ENCODE measurements at regions of chr15 and their contacts with region 1.

Region 1: GRCh38 chr15:91852741-91853510 is 582 bp upstream of the SLCO3A1 start:
- DNase-seq: peak; percentile 73
- H3K4me3 Mint-ChIP-seq: peak overlapping the region; percentile 84
- H3K27ac Mint-ChIP-seq: peak overlapping the region; percentile 89
- H3K4me1 Mint-ChIP-seq: peaks cover 52% of the 10 kb centered on the region
- H3K27me3 Mint-ChIP-seq: peaks cover 6% of the 10 kb centered on the region

Region 2: DNA sequence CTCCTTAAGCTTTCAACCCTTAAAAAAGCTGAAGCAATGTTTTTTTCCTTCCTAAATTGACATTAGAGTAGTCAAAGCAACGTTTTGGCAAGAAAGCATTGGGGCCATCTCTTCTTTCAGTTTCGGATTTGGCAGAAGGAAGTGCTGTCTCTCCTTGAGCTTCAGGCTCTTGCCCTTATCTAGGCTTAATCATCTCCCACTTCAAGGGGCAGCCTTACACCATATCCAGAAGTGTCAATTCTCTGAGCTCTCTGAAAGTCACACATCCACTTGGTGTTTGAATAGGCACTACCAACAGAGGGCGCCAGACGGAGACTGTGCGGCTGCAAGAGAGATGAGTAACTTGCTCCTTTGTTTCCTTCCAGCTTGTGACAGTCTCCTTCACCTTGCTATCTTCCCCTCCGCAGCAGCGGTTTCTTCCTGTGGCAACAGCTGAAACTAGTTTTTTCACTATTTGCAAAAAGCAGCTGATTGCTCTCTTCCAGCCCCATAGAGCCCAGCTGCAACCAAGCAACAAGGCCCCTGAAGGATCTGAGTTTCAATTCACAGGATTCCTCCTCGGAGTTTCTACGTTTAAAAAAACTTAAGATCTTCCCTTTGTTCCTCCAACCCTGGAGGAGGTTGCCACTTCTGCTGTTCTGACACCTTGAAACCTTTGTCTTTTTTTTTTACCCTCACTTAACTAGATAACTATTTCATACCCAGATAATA is 146.4 kb before region 1 on chr15:
- intact Hi-C with region 1: loop called (anchors 2 kb)
- DNase-seq: peak; percentile 86
- H3K4me3 Mint-ChIP-seq: no peak overlapping the region
- H3K27ac Mint-ChIP-seq: peak overlapping the region; percentile 50
- H3K4me1 Mint-ChIP-seq: peaks cover 16% of the 10 kb centered on the region
- H3K27me3 Mint-ChIP-seq: peaks cover 22% of the 10 kb centered on the region

Region 3: DNA sequence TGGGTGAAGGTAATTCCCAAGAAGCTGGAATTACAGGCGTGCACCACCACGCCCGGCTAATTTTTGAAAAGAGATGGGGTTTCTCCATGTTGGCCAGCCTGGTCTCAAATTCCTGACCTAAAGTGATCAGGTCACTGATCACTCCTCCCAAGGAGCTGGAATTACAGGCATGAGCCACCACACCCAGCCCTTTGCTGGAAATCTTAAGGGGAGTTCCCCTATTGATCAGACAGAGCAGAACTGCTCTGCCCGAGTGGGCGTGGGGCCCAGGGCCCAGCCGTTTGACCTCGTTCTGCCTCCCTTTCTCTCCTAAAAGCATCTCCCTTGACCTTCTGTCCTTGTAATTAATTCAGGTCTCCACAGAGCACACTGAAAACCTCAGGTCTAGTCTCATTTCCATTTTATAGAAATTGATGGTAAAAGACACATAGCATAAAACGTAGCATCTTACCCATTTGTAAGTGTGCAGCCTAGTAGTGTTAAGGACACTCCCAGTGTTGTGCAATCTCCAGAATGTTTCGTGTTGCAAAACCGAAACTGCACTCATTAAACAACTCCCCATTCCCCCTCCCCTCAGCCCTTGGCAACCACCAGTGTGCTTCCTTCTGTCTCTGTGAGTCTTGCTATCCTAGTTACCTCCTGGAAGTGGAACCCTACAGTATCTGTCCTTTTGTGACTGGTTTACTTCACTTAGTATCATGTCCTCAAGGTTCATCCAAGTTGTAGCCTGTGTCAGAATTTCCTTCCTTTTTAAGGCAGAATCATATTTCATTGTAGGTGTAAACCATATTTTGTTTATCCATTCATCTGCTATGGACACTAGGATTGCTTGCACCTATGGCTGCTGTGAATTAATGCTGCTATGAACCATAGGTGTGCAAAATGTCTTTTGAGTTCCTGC is 90.0 kb after region 1 on chr15:
- intact Hi-C with region 1: loop called (anchors 5 kb)
- DNase-seq: peak; percentile 52
- H3K4me3 Mint-ChIP-seq: no peak overlapping the region
- H3K27ac Mint-ChIP-seq: peak overlapping the region; percentile 65
- H3K4me1 Mint-ChIP-seq: peaks cover 39% of the 10 kb centered on the region
- H3K27me3 Mint-ChIP-seq: no peaks in the 10 kb centered on the region

Region 4: GRCh38 chr15:91992945-91993344 is 140.0 kb after region 1 on chr15:
- intact Hi-C with region 1: no loop called
- DNase-seq: no peak
- H3K4me3 Mint-ChIP-seq: no peak overlapping the region
- H3K27ac Mint-ChIP-seq: no peak overlapping the region
- H3K4me1 Mint-ChIP-seq: peaks cover 7% of the 10 kb centered on the region
- H3K27me3 Mint-ChIP-seq: no peaks in the 10 kb centered on the region

Region 5: DNA sequence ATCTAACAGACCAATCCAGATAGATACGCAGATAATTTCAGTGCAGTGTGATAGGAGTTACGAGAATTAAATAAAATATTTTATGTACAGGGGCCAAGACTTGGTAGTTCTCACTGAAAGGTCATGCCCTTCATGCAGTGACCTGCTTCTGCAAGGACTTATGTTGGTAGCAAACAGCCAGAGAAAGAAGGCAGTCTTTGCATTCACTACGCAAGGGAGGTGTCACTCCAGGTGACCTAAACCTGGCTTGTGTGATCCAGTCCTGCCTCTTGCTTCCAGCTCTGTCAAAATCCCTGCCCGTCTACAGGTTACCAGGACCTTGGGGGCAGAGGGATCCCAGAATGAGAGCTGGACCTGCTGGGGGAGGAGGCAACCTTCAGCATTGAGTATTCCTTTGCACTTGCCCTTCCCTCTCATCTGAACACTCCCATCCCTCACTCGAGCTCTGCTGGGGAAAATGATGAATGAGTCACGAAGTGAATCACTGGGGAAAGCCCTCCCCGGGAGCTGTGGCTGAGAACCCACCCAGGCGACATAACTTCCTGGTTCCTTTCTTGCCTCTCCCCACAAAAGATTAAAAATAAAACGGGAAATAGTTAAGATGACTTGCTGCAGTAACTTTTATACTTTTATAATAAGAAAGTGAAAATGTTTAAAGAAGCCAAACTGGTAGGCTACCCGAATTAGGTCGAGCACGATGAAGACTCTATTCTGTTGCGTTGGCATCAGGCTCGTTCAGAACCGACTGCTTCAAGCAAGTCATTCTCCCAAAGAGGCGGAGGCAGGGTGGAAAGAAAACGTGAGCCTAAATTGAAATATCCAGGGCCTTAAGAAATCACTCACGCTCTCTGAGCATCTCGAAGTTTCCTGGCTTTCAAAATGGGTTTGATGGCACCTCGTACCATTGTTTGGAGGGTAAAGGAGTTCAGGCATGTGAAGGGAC is 216.7 kb after region 1 on chr15:
- intact Hi-C with region 1: loop called (anchors 2 kb)
- DNase-seq: peak; percentile 13
- H3K4me3 Mint-ChIP-seq: peak overlapping the region; percentile 52
- H3K27ac Mint-ChIP-seq: peak overlapping the region; percentile 58
- H3K4me1 Mint-ChIP-seq: peaks cover 36% of the 10 kb centered on the region
- H3K27me3 Mint-ChIP-seq: peaks cover 3% of the 10 kb centered on the region

Measured in activated T-helper 2 cell treated with anti-CD3 and anti-CD28 coated beads, Interferon-gamma antibody, Interleukin-2, Interleukin-4, amounts not matched to agents 10 μg/mL and 5 μg/mL and 100 μg/mL, durations not matched to agents 14 hours and 24 hours and 36 hours (primary cell).